Heart left ventricle (tissue), 16 donors: ENCODE measurements at regions of chr4 and their contacts with region 1.

Region 1: DNA sequence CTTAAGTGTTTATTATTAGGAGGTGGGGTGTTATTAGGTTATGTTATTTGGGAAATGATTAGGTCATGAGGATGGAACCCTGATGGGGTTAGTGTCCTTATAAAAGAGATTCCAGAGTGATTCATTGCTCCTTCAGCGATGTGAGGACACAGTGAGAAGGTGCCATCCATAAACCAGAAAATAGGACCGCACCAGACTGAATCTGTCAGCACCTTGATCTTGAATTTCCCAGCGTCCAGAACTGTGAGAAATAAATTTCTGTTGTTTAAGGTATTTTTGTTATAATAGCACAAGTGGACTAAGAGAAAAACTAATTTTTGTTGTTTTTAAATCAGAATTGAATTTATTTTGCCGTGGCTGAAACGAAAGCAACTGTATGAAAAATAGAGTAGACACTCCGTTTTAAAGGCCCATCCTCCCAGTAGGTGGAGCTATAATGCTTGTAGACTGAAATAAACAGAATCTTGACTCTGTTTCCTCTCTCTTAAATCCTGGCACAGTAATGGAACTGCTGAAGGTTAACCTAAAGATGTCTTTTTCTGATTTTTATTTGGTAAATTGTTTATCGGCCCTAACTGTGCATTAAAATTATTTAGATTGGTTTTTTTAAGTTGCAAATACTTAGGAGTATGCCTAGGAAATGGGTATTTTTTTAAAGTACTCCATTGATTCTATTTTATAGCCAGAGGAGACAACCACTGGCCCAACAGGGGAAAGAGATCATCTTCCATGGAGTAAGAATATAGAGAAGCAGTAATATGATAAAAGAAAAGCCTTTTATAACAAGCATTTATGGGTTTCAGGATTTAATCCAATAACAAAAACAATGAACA is 133.2 kb upstream of the ADAMTS3 start:
- DNase-seq: peak in 1 of 5 donors; percentile 10
- ATAC-seq: peak in 2 of 4 donors; percentile 36 to 52
- H3K4me3 ChIP-seq: peak overlapping the region in 10 of 12 donors; percentile 27 to 54 (median 47)
- H3K27ac ChIP-seq: no peak overlapping the region
- H3K4me1 ChIP-seq: no peaks in the 10 kb centered on the region
- H3K27me3 ChIP-seq: no peaks in the 10 kb centered on the region
- CTCF ChIP-seq: peak; percentile 32 to 79 (median 62)
- POLR2A ChIP-seq: no peak

Region 2: DNA sequence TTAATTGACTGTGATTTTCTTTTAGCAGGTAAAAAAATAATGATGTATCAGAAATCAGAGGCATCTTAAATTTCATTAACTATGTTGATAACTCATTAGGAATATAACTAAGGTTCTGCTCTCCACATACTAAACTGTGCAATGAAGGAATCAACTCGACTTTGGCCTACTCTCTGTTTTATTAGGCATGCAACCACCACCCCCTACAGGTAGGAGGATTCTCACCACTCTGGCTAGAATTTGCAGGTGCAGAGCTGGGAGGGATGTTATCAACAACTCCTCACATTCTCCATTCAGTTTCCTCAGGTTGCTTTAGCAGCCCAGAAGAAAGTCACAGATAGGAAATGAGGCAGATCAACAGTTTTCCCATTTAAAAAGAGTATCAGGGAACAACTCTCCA is 207.3 kb after region 1 on chr4:
- intact Hi-C with region 1: loop called in 2 of 10 experiments (anchors 10 kb)
- DNase-seq: no peak
- ATAC-seq: peak in 2 of 4 donors; percentile 39 to 46
- H3K4me3 ChIP-seq: no peak overlapping the region
- H3K27ac ChIP-seq: no peak overlapping the region
- H3K4me1 ChIP-seq: no peaks in the 10 kb centered on the region
- H3K27me3 ChIP-seq: no peaks in the 10 kb centered on the region
- CTCF ChIP-seq: peak in 6 of 12 donors; percentile 11 to 42 (median 33)
- POLR2A ChIP-seq: no peak

Region 3: GRCh38 chr4:72919937-72920336 is 217.7 kb after region 1 on chr4:
- intact Hi-C with region 1: loop called in 1 of 10 experiments (anchors 10 kb)
- DNase-seq: no peak
- ATAC-seq: no peak
- H3K4me3 ChIP-seq: no peak overlapping the region
- H3K27ac ChIP-seq: no peak overlapping the region
- H3K4me1 ChIP-seq: no peaks in the 10 kb centered on the region
- H3K27me3 ChIP-seq: no peaks in the 10 kb centered on the region
- CTCF ChIP-seq: no peak
- POLR2A ChIP-seq: no peak

Region 4: GRCh38 chr4:73019462-73020047 is 317.4 kb after region 1 on chr4:
- intact Hi-C with region 1: loop called in 9 of 10 experiments (anchors 2 to 10 kb)
- DNase-seq: no peak
- ATAC-seq: no peak
- H3K4me3 ChIP-seq: no peak overlapping the region
- H3K27ac ChIP-seq: no peak overlapping the region
- H3K4me1 ChIP-seq: no peaks in the 10 kb centered on the region
- H3K27me3 ChIP-seq: no peaks in the 10 kb centered on the region
- CTCF ChIP-seq: peak; percentile 46 to 86 (median 70)
- POLR2A ChIP-seq: no peak